K562 (cell line): ENCODE measurements at regions of chr19 and their contacts with region 1.

Region 1: DNA sequence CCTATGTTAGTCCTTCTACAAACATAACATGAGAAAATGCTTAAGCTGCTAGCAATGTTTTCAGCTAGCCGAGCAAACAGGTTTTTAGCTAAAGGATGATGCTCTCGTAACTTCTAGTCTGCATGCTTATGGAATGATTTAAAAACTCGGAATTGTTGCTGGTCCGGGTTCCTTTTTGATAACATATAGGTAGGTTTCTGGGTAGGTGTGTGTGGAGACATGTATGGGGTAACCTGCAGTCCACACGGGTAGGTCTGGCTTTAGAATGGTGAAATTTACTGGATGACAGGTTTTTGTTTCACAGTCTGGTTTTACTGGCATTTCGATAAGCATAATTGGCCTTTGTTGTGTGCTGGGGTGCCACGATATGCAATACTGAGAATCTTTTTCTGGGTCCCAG is 4.4 kb downstream of the ZNF813 start:
- DNase-seq: no peak
- ATAC-seq: no peak
- H3K4me3 ChIP-seq: no peak overlapping the region
- H3K27ac ChIP-seq: no peak overlapping the region
- H3K4me1 ChIP-seq: peaks cover 2 to 3% of the 10 kb centered on the region in 2 experiments; a peak in 3 of 5 replicates
- H3K27me3 ChIP-seq: no peaks in the 10 kb centered on the region
- CTCF ChIP-seq: no peak
- EP300 ChIP-seq: no peak
- POLR2A ChIP-seq: no peak
- RAD21 ChIP-seq: no peak

Region 2: GRCh38 chr19:53431399-53432087 is 40.4 kb before region 1 on chr19 and contains the start of gene ZNF761:
- CTCF ChIA-PET with region 1: no interaction called
- POLR2A ChIA-PET with region 1: no interaction called
- in situ Hi-C with region 1: loop called (anchors 5 kb)
- intact Hi-C with region 1: no loop called
- DNase-seq: peak; percentile 93 to 97 (median 96)
- ATAC-seq: peak; percentile 100
- H3K4me3 ChIP-seq: peak within 1 kb of the TSS; percentile 93
- H3K27ac ChIP-seq: peak within 1 kb of the TSS; percentile 84
- H3K4me1 ChIP-seq: peaks cover 0 to 10% of the 10 kb centered on the region in 2 experiments; a peak in 2 of 5 replicates
- H3K27me3 ChIP-seq: no peaks in the 10 kb centered on the region
- CTCF ChIP-seq: peak; percentile 25 to 38 (median 29); a peak in 3 of 6 replicates
- EP300 ChIP-seq: no peak
- POLR2A ChIP-seq: peak; percentile 93
- RAD21 ChIP-seq: no peak
- polyA plus RNA-seq, gene ZNF761: 13.0 to 30.2 TPM

Region 3: GRCh38 chr19:53498581-53498980 is 26.7 kb after region 1 on chr19:
- CTCF ChIA-PET with region 1: no interaction called
- POLR2A ChIA-PET with region 1: no interaction called
- in situ Hi-C with region 1: no loop called
- intact Hi-C with region 1: no loop called
- DNase-seq: no peak
- ATAC-seq: no peak
- H3K4me3 ChIP-seq: no peak overlapping the region
- H3K27ac ChIP-seq: no peak overlapping the region
- H3K4me1 ChIP-seq: no peaks in the 10 kb centered on the region
- H3K27me3 ChIP-seq: no peaks in the 10 kb centered on the region
- CTCF ChIP-seq: no peak
- EP300 ChIP-seq: no peak
- POLR2A ChIP-seq: no peak
- RAD21 ChIP-seq: no peak